Thyroid gland (tissue), 4 donors: ENCODE measurements at regions of chr11 and their contacts with region 1.

Region 1: GRCh38 chr11:119205574-119206510 is at the start of gene CBL:
- DNase-seq: peak; percentile 92 to 96
- H3K4me3 ChIP-seq: peak within 1 kb of the TSS; percentile 63 to 96 (median 65)
- H3K27ac ChIP-seq: peak within 1 kb of the TSS; percentile 92 to 97 (median 94)
- H3K4me1 ChIP-seq: peaks cover 15 to 18% of the 10 kb centered on the region in 2 donors
- H3K27me3 ChIP-seq: no peaks in the 10 kb centered on the region
- CTCF ChIP-seq: peak; percentile 71 to 99 (median 86)
- POLR2A ChIP-seq: peak; percentile 10 to 63
- total RNA-seq, gene CBL: 9.4 to 14.5 (median 13.9) TPM

Region 2: DNA sequence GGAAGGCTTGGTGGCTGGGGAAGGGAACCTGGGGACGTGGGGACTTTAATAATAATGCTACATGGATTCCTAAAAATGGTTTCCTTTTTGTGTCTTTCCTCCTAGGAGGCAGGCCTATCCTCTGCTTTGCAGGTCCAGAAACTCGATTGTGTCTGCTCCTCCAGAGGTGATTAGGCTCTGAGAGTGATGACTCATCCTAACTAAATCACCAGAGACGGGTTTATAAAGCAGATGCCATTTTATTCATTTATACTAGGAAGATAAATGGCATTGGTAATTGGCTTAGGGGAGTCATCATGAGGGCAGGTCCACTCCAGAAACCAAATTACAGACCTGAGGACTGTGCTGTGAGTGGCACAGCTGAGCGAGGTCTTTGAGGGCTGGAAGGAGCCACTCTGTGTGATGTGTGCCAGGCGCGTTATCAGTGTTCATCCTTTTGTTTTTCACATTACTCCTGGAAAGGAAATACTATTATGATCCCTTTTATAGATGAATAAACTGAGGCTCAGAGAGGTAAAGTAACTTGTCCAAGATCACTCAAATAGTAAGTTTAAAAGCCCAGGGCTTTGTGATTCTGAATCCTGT is 30.3 kb before region 1 on chr11:
- intact Hi-C with region 1: no loop called
- DNase-seq: no peak
- H3K4me3 ChIP-seq: no peak overlapping the region
- H3K27ac ChIP-seq: no peak overlapping the region
- H3K4me1 ChIP-seq: no peaks in the 10 kb centered on the region
- H3K27me3 ChIP-seq: no peaks in the 10 kb centered on the region
- CTCF ChIP-seq: no peak
- POLR2A ChIP-seq: no peak

Region 3: GRCh38 chr11:119284344-119285157 is 78.7 kb after region 1 on chr11:
- intact Hi-C with region 1: loop called (anchors 10 kb)
- DNase-seq: no peak
- H3K4me3 ChIP-seq: no peak overlapping the region
- H3K27ac ChIP-seq: no peak overlapping the region
- H3K4me1 ChIP-seq: no peaks in the 10 kb centered on the region
- H3K27me3 ChIP-seq: no peaks in the 10 kb centered on the region
- CTCF ChIP-seq: peak in 4 of 6 experiments; percentile 25 to 52 (median 46)
- POLR2A ChIP-seq: no peak

Region 4: DNA sequence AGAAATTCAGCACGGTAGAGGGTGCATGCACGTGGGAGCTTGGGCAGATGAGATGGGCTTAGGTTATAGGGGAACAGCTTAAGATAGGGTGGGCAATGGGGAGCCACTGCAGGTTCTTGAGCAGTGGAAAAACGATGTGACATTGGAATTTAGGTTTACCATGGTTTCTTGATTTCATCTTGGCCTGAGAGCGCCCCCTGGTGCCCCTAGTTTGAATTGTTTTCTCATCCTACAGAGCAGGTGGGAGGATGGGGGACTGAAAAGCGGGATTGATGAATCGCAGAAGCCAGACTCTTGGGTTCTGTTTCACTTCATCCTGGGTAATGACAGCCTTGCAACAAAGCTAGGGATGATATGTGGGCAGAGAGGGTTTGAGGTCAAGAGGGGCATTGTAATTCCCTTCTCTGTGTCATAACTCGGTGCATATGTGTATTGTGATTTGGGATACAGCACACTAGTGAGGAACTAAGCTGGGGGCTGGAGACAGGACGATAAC is 117.7 kb after region 1 on chr11:
- intact Hi-C with region 1: loop called (anchors 10 kb)
- DNase-seq: peak; percentile 58 to 70
- H3K4me3 ChIP-seq: no peak overlapping the region
- H3K27ac ChIP-seq: no peak overlapping the region
- H3K4me1 ChIP-seq: peaks cover 15 to 27% of the 10 kb centered on the region in 2 donors
- H3K27me3 ChIP-seq: peaks cover 8% of the 10 kb centered on the region
- CTCF ChIP-seq: peak; percentile 48 to 66 (median 61)
- POLR2A ChIP-seq: no peak

Region 5: GRCh38 chr11:119666463-119667131 is 460.8 kb after region 1 on chr11:
- intact Hi-C with region 1: no loop called
- DNase-seq: peak; percentile 66 to 71
- H3K4me3 ChIP-seq: no peak overlapping the region
- H3K27ac ChIP-seq: no peak overlapping the region
- H3K4me1 ChIP-seq: peaks cover 0 to 3% of the 10 kb centered on the region in 2 donors
- H3K27me3 ChIP-seq: no peaks in the 10 kb centered on the region
- CTCF ChIP-seq: peak; percentile 55 to 91 (median 82)
- POLR2A ChIP-seq: no peak